ENCODE measurements at regions of chr1 and their contacts with region 1.

Region 1: GRCh38 chr1:16440470-16441281 is at the start of gene NECAP2:
- DNase-seq: peak; percentile 92
- CTCF ChIP-seq: peak; percentile 96

Region 2: GRCh38 chr1:16420424-16421118 is 20.1 kb before region 1 on chr1:
- CTCF ChIA-PET with region 1: interaction called, 33 read pairs
- POLR2A ChIA-PET with region 1: no interaction called
- DNase-seq: peak; percentile 59
- CTCF ChIP-seq: no peak

Region 3: GRCh38 chr1:16451841-16452528 is 11.3 kb after region 1 on chr1:
- CTCF ChIA-PET with region 1: interaction called, 51 read pairs
- POLR2A ChIA-PET with region 1: interaction called, 3 read pairs
- DNase-seq: peak; percentile 47
- CTCF ChIP-seq: no peak